CD8-positive, alpha-beta memory T cell (primary cell): ENCODE measurements at regions of chr6 and their contacts with region 1.

Region 1: DNA sequence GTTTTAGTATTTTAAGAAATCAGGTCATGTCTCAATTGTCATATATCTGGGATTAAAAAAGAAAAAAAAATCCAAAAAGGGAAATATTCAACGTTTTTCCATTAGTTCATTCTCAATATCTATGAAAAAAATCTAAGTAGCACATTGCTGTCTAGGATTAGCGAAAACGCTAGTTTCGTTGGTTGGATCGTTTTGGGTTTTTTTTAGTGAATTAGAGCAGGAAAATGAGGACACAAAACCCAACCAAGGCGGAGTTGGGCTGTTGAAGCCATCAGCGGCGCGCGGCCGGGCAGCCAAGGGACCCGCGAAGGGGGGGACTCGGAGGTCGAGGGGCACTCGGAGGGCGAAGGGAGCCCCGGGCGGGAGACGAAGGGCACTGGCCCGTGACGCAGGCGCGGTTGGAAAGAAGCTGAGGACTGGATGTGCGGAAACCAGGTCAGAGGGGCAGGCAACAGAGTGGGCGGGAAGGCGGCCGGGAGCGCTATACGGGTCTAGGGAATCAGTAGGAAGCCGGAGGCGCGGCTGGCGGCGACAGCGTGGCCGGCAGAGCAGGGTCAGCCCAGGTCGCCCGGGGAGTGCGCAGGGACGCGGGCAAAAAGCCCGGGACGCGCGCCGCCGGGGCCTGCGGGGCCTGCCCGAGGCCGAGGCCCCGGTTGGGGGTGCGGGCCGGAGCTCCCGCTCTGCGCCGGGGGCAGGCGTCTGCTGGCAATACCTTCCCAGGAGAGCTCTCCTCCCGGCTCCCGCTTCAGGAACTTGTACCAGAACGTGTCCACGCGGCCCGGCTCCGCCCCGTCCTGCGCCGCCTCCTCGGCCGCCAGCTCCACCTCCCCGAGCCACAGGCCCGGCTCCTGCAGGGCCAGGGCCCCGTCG is 599 bp downstream of the EPM2A start:
- DNase-seq: peak; percentile 50 to 81 (median 64)
- H3K4me3 ChIP-seq: peak overlapping the region; percentile 86
- H3K4me3 Mint-ChIP-seq: peak overlapping the region; percentile 90 to 100 (median 95)
- H3K27ac ChIP-seq: peak overlapping the region; percentile 87
- H3K27ac Mint-ChIP-seq: peak overlapping the region; percentile 90 to 99 (median 94)
- H3K4me1 ChIP-seq: peaks cover 10% of the 10 kb centered on the region
- H3K4me1 Mint-ChIP-seq: peaks cover 13 to 26% (median 22%) of the 10 kb centered on the region in 3 donors
- H3K27me3 ChIP-seq: no peaks in the 10 kb centered on the region
- H3K27me3 Mint-ChIP-seq: no peaks in the 10 kb centered on the region

Region 2: DNA sequence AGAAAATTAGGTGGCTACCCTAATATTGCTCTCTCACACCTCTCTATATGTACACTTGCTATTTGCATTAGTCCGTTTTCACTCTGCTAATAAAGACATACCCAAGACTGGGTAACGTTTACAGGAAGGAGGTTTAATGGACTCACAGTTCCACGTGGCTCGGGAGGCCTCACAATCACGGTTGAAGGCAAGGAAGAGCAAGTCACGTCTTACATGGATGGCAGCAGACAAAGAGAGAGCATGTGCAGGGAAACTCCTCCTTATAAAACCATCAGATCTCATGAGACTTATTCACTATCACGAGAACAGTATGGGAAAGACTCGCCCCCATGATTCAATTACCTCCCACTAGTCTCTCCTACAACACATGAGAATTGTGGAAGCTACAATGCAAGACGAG is 52.8 kb before region 1 on chr6:
- CTCF ChIA-PET with region 1: no interaction called
- POLR2A ChIA-PET with region 1: no interaction called
- DNase-seq: no peak
- H3K4me3 ChIP-seq: no peak overlapping the region
- H3K4me3 Mint-ChIP-seq: no peak overlapping the region
- H3K27ac ChIP-seq: no peak overlapping the region
- H3K27ac Mint-ChIP-seq: no peak overlapping the region
- H3K4me1 ChIP-seq: no peaks in the 10 kb centered on the region
- H3K4me1 Mint-ChIP-seq: no peaks in the 10 kb centered on the region
- H3K27me3 ChIP-seq: no peaks in the 10 kb centered on the region
- H3K27me3 Mint-ChIP-seq: no peaks in the 10 kb centered on the region

Region 3: GRCh38 chr6:145814501-145815308 is 80.0 kb after region 1 on chr6 and contains the start of gene FBXO30:
- CTCF ChIA-PET with region 1: no interaction called
- POLR2A ChIA-PET with region 1: interaction called, 32 read pairs
- DNase-seq: peak; percentile 78 to 90 (median 86)
- H3K4me3 ChIP-seq: peak within 1 kb of the TSS; percentile 92
- H3K4me3 Mint-ChIP-seq: peak within 1 kb of the TSS; percentile 93 to 100 (median 95)
- H3K27ac ChIP-seq: peak within 1 kb of the TSS; percentile 87
- H3K27ac Mint-ChIP-seq: peak within 1 kb of the TSS; percentile 91 to 98 (median 94)
- H3K4me1 ChIP-seq: peaks cover 20% of the 10 kb centered on the region
- H3K4me1 Mint-ChIP-seq: peaks cover 35 to 73% (median 69%) of the 10 kb centered on the region in 3 donors
- H3K27me3 ChIP-seq: no peaks in the 10 kb centered on the region
- H3K27me3 Mint-ChIP-seq: no peaks in the 10 kb centered on the region
- total RNA-seq, gene FBXO30: 7.9 to 8.4 TPM

Region 4: GRCh38 chr6:145866456-145867396 is 132.0 kb after region 1 on chr6:
- CTCF ChIA-PET with region 1: interaction called, 4 read pairs
- POLR2A ChIA-PET with region 1: interaction called, 13 read pairs
- DNase-seq: peak in 3 of 5 donors; percentile 6 to 52 (median 8)
- H3K4me3 ChIP-seq: no peak overlapping the region
- H3K4me3 Mint-ChIP-seq: peak overlapping the region; percentile 2 to 82 (median 60)
- H3K27ac ChIP-seq: peak overlapping the region; percentile 28
- H3K27ac Mint-ChIP-seq: peak overlapping the region; percentile 38 to 96 (median 84)
- H3K4me1 ChIP-seq: peaks cover 34% of the 10 kb centered on the region
- H3K4me1 Mint-ChIP-seq: peaks cover 30 to 58% (median 58%) of the 10 kb centered on the region in 3 donors
- H3K27me3 ChIP-seq: no peaks in the 10 kb centered on the region
- H3K27me3 Mint-ChIP-seq: no peaks in the 10 kb centered on the region

Region 5: GRCh38 chr6:145963216-145964068 is 228.7 kb after region 1 on chr6:
- CTCF ChIA-PET with region 1: interaction called, 4 read pairs
- POLR2A ChIA-PET with region 1: interaction called, 15 read pairs
- DNase-seq: peak; percentile 22 to 63 (median 29)
- H3K4me3 ChIP-seq: peak overlapping the region; percentile 81
- H3K4me3 Mint-ChIP-seq: peak overlapping the region; percentile 94 to 100 (median 99)
- H3K27ac ChIP-seq: peak overlapping the region; percentile 81
- H3K27ac Mint-ChIP-seq: peak overlapping the region; percentile 87 to 99 (median 98)
- H3K4me1 ChIP-seq: peaks cover 39% of the 10 kb centered on the region
- H3K4me1 Mint-ChIP-seq: peaks cover 38 to 71% (median 57%) of the 10 kb centered on the region in 3 donors
- H3K27me3 ChIP-seq: no peaks in the 10 kb centered on the region
- H3K27me3 Mint-ChIP-seq: no peaks in the 10 kb centered on the region